H1 (cell line): ENCODE measurements at regions of chr6 and their contacts with region 1.

Region 1: GRCh38 chr6:52419809-52420670 is at the start of gene EFHC1:
- DNase-seq: peak; percentile 96 to 99
- H3K4me3 ChIP-seq: peak within 1 kb of the TSS; percentile 77 to 90 (median 88)
- H3K27ac ChIP-seq: peak within 1 kb of the TSS; percentile 78
- H3K4me1 ChIP-seq: peaks cover 0 to 4% (median 0%) of the 10 kb centered on the region in 4 experiments; a peak in 1 of 7 replicates
- H3K27me3 ChIP-seq: no peaks in the 10 kb centered on the region
- CTCF ChIP-seq: no peak
- EP300 ChIP-seq: no peak
- POLR2A ChIP-seq: peak; percentile 73 to 92
- RAD21 ChIP-seq: no peak
- total RNA-seq, gene EFHC1: 14.7 and 16.4 TPM in 2 replicates

Region 2: DNA sequence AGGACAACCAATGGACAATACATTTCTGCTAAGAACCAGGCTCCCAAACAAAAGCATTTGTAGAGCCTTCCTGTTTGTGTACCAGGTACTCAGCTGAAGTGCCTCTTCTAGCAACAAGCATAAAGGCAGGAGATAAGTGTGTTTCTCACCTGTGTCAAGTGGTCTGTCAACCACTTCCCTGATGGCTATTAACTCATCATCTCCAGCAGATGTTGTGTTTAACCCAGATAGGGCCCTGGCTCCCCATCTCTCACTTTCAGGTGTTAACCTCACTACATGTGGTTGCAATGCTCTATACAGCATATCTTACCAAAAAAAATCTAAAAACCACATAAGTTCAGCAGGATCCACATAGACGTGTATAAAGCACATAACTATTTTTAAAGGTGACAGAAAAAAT is 243.5 kb before region 1 on chr6:
- CTCF ChIA-PET with region 1: no interaction called
- POLR2A ChIA-PET with region 1: no interaction called
- DNase-seq: no peak
- H3K4me3 ChIP-seq: no peak overlapping the region
- H3K27ac ChIP-seq: no peak overlapping the region
- H3K4me1 ChIP-seq: no peaks in the 10 kb centered on the region
- H3K27me3 ChIP-seq: no peaks in the 10 kb centered on the region
- CTCF ChIP-seq: no peak
- EP300 ChIP-seq: no peak
- POLR2A ChIP-seq: no peak
- RAD21 ChIP-seq: no peak

Region 3: GRCh38 chr6:52498538-52499017 is 78.5 kb after region 1 on chr6:
- CTCF ChIA-PET with region 1: interaction called, 10 read pairs
- POLR2A ChIA-PET with region 1: interaction called, 3 read pairs
- DNase-seq: no peak
- H3K4me3 ChIP-seq: no peak overlapping the region
- H3K27ac ChIP-seq: no peak overlapping the region
- H3K4me1 ChIP-seq: peaks cover 0 to 6% (median 1%) of the 10 kb centered on the region in 4 experiments; a peak in 4 of 7 replicates
- H3K27me3 ChIP-seq: no peaks in the 10 kb centered on the region
- CTCF ChIP-seq: no peak
- EP300 ChIP-seq: no peak
- POLR2A ChIP-seq: no peak
- RAD21 ChIP-seq: no peak

Region 4: DNA sequence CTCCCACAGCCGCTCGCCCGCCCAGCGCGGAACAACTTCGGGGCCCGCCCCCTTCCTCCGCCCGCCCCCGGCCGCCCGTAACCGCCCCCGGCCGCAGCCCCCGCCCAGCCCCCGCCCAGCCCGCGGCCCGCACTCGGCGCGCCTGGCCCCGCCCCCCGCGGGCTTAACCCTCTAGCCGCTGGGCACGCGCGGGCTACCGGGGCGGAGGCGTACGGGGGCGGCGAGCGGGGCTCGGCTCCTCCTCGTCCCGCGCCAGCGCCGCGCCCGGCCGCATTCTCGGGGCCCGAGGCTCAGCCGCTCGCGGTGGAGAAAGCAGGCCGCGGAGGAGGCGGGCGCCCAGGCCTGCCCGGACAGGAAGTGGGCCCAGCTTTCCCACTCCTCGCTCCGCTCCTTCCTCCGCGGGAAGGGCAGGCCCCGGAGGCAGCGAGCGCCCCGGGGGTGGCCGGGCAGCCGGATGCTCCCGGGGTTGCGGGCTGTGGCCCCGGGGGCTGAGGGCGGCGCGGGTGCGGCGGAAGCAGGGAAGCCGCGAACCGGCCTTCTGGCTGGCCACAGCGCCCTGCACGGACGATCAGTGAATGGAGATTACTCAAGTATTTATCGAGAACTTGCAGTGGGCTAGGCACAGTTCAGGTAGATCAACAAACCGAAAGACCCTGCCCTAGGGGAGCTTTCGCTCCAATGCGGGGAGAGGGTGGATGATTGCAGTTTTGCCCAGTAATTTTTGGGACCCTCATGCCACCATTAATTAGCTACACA is 157.2 kb after region 1 on chr6 and contains the start of gene TRAM2:
- CTCF ChIA-PET with region 1: interaction called, 34 read pairs
- POLR2A ChIA-PET with region 1: interaction called, 17 read pairs
- DNase-seq: peak in 1 of 2 experiments; percentile 85
- H3K4me3 ChIP-seq: peak within 1 kb of the TSS; percentile 70 to 93 (median 86)
- H3K27ac ChIP-seq: peak within 1 kb of the TSS; percentile 86
- H3K4me1 ChIP-seq: peaks cover 14 to 28% (median 21%) of the 10 kb centered on the region in 4 experiments
- H3K27me3 ChIP-seq: no peaks in the 10 kb centered on the region
- CTCF ChIP-seq: peak in 1 of 3 experiments; percentile 20; a peak in 2 of 4 replicates
- EP300 ChIP-seq: no peak
- POLR2A ChIP-seq: peak; percentile 70 to 87
- RAD21 ChIP-seq: peak in 1 of 2 experiments; percentile 14; a peak in 1 of 4 replicates
- total RNA-seq, gene TRAM2: 21.4 and 21.6 TPM in 2 replicates

Region 5: DNA sequence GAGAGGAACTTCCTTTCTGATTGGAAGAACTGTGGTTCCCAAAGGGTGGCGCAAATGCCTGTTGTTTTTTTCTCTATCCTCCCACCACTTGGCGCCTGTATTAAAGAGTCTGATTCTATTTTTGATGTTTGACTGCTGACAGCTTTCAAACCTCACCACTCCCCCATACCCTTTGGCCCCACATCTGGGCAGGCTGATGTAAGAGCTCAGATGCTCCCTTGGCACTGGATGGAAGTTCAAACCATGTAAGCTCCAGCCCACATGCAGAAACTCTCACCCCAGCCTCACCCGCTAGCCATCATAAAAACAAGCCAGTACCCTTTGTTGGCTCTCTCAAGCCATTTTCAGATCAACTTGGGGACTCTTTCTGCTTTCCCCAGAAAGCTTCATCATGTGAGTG is 230.9 kb after region 1 on chr6:
- CTCF ChIA-PET with region 1: interaction called, 46 read pairs
- POLR2A ChIA-PET with region 1: no interaction called
- DNase-seq: no peak
- H3K4me3 ChIP-seq: no peak overlapping the region
- H3K27ac ChIP-seq: no peak overlapping the region
- H3K4me1 ChIP-seq: peaks cover 0 to 3% (median 0%) of the 10 kb centered on the region in 4 experiments; a peak in 1 of 7 replicates
- H3K27me3 ChIP-seq: no peaks in the 10 kb centered on the region
- CTCF ChIP-seq: no peak
- EP300 ChIP-seq: no peak
- POLR2A ChIP-seq: no peak
- RAD21 ChIP-seq: no peak